ENCODE measurements at regions of chr16 and their contacts with region 1.

Region 1: GRCh38 chr16:982145-983043 is 824 bp downstream of the SOX8 start:
- DNase-seq: peak in 1 of 5 donors; percentile 28
- H3K4me3 ChIP-seq: no peak overlapping the region
- H3K4me3 Mint-ChIP-seq: peak overlapping the region in 6 of 7 donors; percentile 24 to 66 (median 58)
- H3K27ac ChIP-seq: no peak overlapping the region
- H3K27ac Mint-ChIP-seq: peak overlapping the region in 1 of 8 donors; percentile 46
- H3K4me1 ChIP-seq: peaks cover 4% of the 10 kb centered on the region
- H3K4me1 Mint-ChIP-seq: peaks cover 0 to 4% (median 0%) of the 10 kb centered on the region in 3 donors
- H3K27me3 ChIP-seq: peaks cover 6% of the 10 kb centered on the region
- H3K27me3 Mint-ChIP-seq: peaks cover 0 to 6% of the 10 kb centered on the region in 2 donors

Region 2: DNA sequence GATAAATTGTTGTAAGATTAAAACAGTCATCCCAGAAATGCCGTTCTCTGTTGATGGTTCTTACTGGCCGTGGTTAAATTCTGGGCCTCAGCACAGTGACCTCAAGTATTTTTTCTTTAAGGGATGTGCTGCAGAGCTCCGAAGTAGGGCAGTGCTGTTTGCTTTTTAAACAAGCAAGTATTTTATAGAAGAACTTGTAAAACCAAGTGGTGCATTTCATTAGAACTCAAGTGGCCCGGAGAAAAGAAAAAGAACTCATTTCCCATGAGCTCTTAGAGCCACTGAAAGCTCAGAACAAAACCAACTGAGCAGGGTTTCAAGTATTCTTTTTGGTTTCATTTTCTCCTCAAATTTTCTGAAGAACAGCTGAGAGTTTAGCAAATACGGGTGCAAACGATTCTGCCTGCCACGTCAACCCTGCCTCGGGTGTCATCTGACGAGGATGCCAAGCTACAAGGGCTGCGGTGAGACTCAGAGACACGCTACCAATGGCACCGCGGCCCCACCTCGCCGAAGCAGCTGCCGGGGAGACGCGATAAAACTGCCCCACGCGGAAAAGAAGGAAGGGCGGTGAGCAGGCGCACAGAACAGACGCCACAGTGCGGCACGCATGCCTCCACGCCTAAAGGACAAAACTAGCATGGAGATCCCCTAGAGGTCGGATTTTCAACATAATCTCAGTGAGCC is 17.9 kb before region 1 on chr16:
- CTCF ChIA-PET with region 1: interaction called, 3 read pairs
- POLR2A ChIA-PET with region 1: interaction called, 12 read pairs
- DNase-seq: peak in 4 of 5 donors; percentile 48 to 87 (median 60)
- H3K4me3 ChIP-seq: no peak overlapping the region
- H3K4me3 Mint-ChIP-seq: peak overlapping the region; percentile 58 to 89 (median 71)
- H3K27ac ChIP-seq: no peak overlapping the region
- H3K27ac Mint-ChIP-seq: peak overlapping the region; percentile 76 to 95 (median 90)
- H3K4me1 ChIP-seq: peaks cover 16% of the 10 kb centered on the region
- H3K4me1 Mint-ChIP-seq: peaks cover 38 to 64% (median 49%) of the 10 kb centered on the region in 3 donors
- H3K27me3 ChIP-seq: no peaks in the 10 kb centered on the region
- H3K27me3 Mint-ChIP-seq: no peaks in the 10 kb centered on the region

Region 3: GRCh38 chr16:997440-998051 is 15.2 kb after region 1 on chr16:
- CTCF ChIA-PET with region 1: interaction called, 5 read pairs
- POLR2A ChIA-PET with region 1: interaction called, 11 read pairs
- DNase-seq: peak; percentile 31 to 72 (median 58)
- H3K4me3 ChIP-seq: peak overlapping the region; percentile 69
- H3K4me3 Mint-ChIP-seq: peak overlapping the region; percentile 77 to 89 (median 81)
- H3K27ac ChIP-seq: peak overlapping the region; percentile 72
- H3K27ac Mint-ChIP-seq: peak overlapping the region; percentile 67 to 96 (median 85)
- H3K4me1 ChIP-seq: peaks cover 39% of the 10 kb centered on the region
- H3K4me1 Mint-ChIP-seq: peaks cover 25 to 59% (median 35%) of the 10 kb centered on the region in 3 donors
- H3K27me3 ChIP-seq: no peaks in the 10 kb centered on the region
- H3K27me3 Mint-ChIP-seq: peaks cover 0 to 2% of the 10 kb centered on the region in 2 donors

Region 4: DNA sequence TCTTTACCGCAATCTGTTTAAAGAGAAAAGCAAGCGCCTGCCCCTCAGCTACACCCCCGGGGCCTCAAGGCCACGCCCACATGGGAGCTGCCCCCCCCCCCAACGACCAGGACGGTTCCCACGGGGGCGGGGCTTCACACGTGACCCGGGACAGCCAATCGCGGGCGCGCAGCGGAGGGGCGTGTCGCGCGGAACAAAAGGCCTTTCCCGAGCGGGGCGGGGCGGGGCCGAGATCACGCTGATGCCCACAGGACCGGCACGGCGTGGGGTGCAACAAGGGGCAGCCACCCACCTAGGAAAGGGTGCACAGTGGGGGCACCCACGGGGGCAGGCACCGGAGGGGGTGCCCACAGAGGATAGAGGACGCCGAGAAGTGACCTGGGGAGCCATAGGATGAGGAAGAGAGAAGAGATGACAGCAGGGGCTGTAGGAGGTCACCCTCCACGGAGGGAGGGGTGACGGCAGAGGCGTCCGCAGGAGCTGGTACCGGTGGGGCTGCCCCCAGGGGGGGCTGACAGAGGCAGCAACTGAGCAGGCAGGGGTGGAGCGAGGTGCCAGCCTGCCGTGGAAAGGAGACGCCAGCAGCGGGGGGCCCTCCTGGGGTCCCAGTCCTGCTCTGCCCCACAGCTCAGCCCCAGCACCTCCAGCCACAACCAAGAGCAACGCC is 425.9 kb after region 1 on chr16:
- CTCF ChIA-PET with region 1: no interaction called
- POLR2A ChIA-PET with region 1: no interaction called
- DNase-seq: peak; percentile 92 to 97 (median 96)
- H3K4me3 ChIP-seq: peak overlapping the region; percentile 62
- H3K4me3 Mint-ChIP-seq: peak overlapping the region; percentile 69 to 87 (median 74)
- H3K27ac ChIP-seq: no peak overlapping the region
- H3K27ac Mint-ChIP-seq: peak overlapping the region in 5 of 8 donors; percentile 29 to 90 (median 68)
- H3K4me1 ChIP-seq: peaks cover 19% of the 10 kb centered on the region
- H3K4me1 Mint-ChIP-seq: peaks cover 16 to 56% (median 21%) of the 10 kb centered on the region in 3 donors
- H3K27me3 ChIP-seq: no peaks in the 10 kb centered on the region
- H3K27me3 Mint-ChIP-seq: no peaks in the 10 kb centered on the region

Measured in CD8-positive, alpha-beta memory T cell (primary cell).